ENCODE measurements at regions of chr10 and their contacts with region 1.

Region 1: DNA sequence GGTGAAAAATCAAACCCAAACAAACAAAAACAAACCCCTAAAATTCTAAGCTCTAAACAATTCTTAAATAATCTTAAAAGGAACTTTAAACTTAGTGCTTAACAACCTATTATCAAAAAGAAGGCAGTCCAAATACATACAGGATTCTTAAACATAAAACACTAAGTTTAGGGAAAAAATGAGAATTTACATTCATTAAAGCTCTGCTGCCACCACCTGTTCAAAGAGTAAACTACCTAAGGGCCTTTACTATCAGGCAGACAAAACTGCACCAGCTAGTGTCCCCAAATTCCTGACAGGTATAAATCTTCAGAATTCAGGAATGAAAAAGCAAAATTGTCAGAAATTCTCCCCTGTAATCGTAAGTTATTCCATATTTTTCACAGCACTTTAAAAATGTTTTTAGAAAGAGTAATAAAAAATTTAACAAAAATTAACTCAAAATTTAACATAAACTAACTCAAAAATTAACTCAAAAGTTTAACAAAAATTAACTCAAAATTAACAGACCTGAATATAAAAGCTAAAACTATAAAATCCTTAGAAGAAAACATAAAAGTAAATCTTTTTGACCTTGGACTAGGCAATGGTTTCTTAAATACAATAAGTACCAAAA is 55.1 kb downstream of the PDZD8 start:
- DNase-seq: no peak
- ATAC-seq: peak; percentile 80
- H3K4me3 ChIP-seq: no peak overlapping the region
- H3K27ac ChIP-seq: no peak overlapping the region
- H3K4me1 ChIP-seq: no peaks in the 10 kb centered on the region
- H3K27me3 ChIP-seq: no peaks in the 10 kb centered on the region
- CTCF ChIP-seq: peak; percentile 48 to 65 (median 56)
- EP300 ChIP-seq: no peak
- POLR2A ChIP-seq: no peak
- RAD21 ChIP-seq: peak; percentile 62

Region 2: GRCh38 chr10:117216611-117217195 is 103.5 kb before region 1 on chr10:
- CTCF ChIA-PET with region 1: interaction called, 136 read pairs
- POLR2A ChIA-PET with region 1: no interaction called
- RAD21 ChIA-PET with region 1: interaction called, 38 read pairs
- SMC1A ChIA-PET with region 1: interaction called, 44 read pairs
- in situ Hi-C with region 1: loop called (anchors 5 kb)
- intact Hi-C with region 1: loop called (anchors 1 kb)
- DNase-seq: no peak
- ATAC-seq: peak; percentile 94
- H3K4me3 ChIP-seq: peak overlapping the region; percentile 52
- H3K27ac ChIP-seq: no peak overlapping the region
- H3K4me1 ChIP-seq: peaks cover 3% of the 10 kb centered on the region; the same call in 1 of the 2 replicates
- H3K27me3 ChIP-seq: no peaks in the 10 kb centered on the region; a peak in 2 of 4 replicates
- CTCF ChIP-seq: peak; percentile 99 to 100 (median 100)
- EP300 ChIP-seq: no peak
- POLR2A ChIP-seq: no peak
- RAD21 ChIP-seq: peak; percentile 90

Region 3: GRCh38 chr10:117249493-117250093 is 70.6 kb before region 1 on chr10:
- CTCF ChIA-PET with region 1: interaction called, 23 read pairs
- POLR2A ChIA-PET with region 1: no interaction called
- RAD21 ChIA-PET with region 1: no interaction called
- SMC1A ChIA-PET with region 1: interaction called, 4 read pairs
- in situ Hi-C with region 1: no loop called
- intact Hi-C with region 1: no loop called
- DNase-seq: no peak
- ATAC-seq: peak; percentile 70
- H3K4me3 ChIP-seq: no peak overlapping the region
- H3K27ac ChIP-seq: no peak overlapping the region
- H3K4me1 ChIP-seq: no peaks in the 10 kb centered on the region
- H3K27me3 ChIP-seq: no peaks in the 10 kb centered on the region; a peak in 3 of 4 replicates
- CTCF ChIP-seq: no peak
- EP300 ChIP-seq: no peak
- POLR2A ChIP-seq: no peak
- RAD21 ChIP-seq: no peak

Region 4: GRCh38 chr10:117334066-117334465 is 13.9 kb after region 1 on chr10:
- CTCF ChIA-PET with region 1: interaction called, 37 read pairs
- POLR2A ChIA-PET with region 1: interaction called, 3 read pairs
- RAD21 ChIA-PET with region 1: interaction called, 5 read pairs
- SMC1A ChIA-PET with region 1: interaction called, 7 read pairs
- in situ Hi-C with region 1: no loop called
- intact Hi-C with region 1: no loop called
- DNase-seq: no peak
- ATAC-seq: no peak
- H3K4me3 ChIP-seq: no peak overlapping the region
- H3K27ac ChIP-seq: no peak overlapping the region
- H3K4me1 ChIP-seq: no peaks in the 10 kb centered on the region
- H3K27me3 ChIP-seq: no peaks in the 10 kb centered on the region
- CTCF ChIP-seq: no peak
- EP300 ChIP-seq: no peak
- POLR2A ChIP-seq: no peak
- RAD21 ChIP-seq: no peak

Region 5: GRCh38 chr10:117360994-117361667 is 41.0 kb after region 1 on chr10:
- CTCF ChIA-PET with region 1: interaction called, 16 read pairs
- POLR2A ChIA-PET with region 1: interaction called, 3 read pairs
- RAD21 ChIA-PET with region 1: interaction called, 4 read pairs
- SMC1A ChIA-PET with region 1: interaction called, 5 read pairs
- in situ Hi-C with region 1: no loop called
- intact Hi-C with region 1: no loop called
- DNase-seq: no peak
- ATAC-seq: peak; percentile 48
- H3K4me3 ChIP-seq: no peak overlapping the region
- H3K27ac ChIP-seq: peak overlapping the region; percentile 37
- H3K4me1 ChIP-seq: peaks cover 15% of the 10 kb centered on the region
- H3K27me3 ChIP-seq: no peaks in the 10 kb centered on the region
- CTCF ChIP-seq: no peak
- EP300 ChIP-seq: no peak
- POLR2A ChIP-seq: no peak
- RAD21 ChIP-seq: no peak

Region 6: GRCh38 chr10:117375360-117376178 is 55.4 kb after region 1 on chr10 and contains the start of gene PDZD8:
- CTCF ChIA-PET with region 1: interaction called, 17 read pairs
- POLR2A ChIA-PET with region 1: no interaction called
- RAD21 ChIA-PET with region 1: interaction called, 5 read pairs
- SMC1A ChIA-PET with region 1: interaction called, 16 read pairs
- in situ Hi-C with region 1: no loop called
- intact Hi-C with region 1: loop called (anchors 5 kb)
- DNase-seq: peak; percentile 33
- ATAC-seq: peak; percentile 83
- H3K4me3 ChIP-seq: peak within 1 kb of the TSS; percentile 84
- H3K27ac ChIP-seq: peak within 1 kb of the TSS; percentile 69
- H3K4me1 ChIP-seq: 0 out of 2 replicates have a peak, but pooled peaks cover 5% of the 10 kb centered on the region
- H3K27me3 ChIP-seq: no peaks in the 10 kb centered on the region; a peak in 1 of 4 replicates
- CTCF ChIP-seq: no peak
- EP300 ChIP-seq: no peak
- POLR2A ChIP-seq: peak; percentile 74; the same call in 1 of the 2 replicates
- RAD21 ChIP-seq: no peak
- polyA plus RNA-seq, gene PDZD8: 2.0 to 2.1 TPM

Region 7: GRCh38 chr10:117442944-117443685 is 123.0 kb after region 1 on chr10:
- CTCF ChIA-PET with region 1: interaction called, 14 read pairs
- POLR2A ChIA-PET with region 1: no interaction called
- RAD21 ChIA-PET with region 1: interaction called, 3 read pairs
- SMC1A ChIA-PET with region 1: interaction called, 5 read pairs
- in situ Hi-C with region 1: no loop called
- intact Hi-C with region 1: no loop called
- DNase-seq: peak; percentile 16
- ATAC-seq: peak; percentile 90
- H3K4me3 ChIP-seq: no peak overlapping the region
- H3K27ac ChIP-seq: no peak overlapping the region
- H3K4me1 ChIP-seq: 0 out of 2 replicates have a peak, but pooled peaks cover 5% of the 10 kb centered on the region
- H3K27me3 ChIP-seq: no peaks in the 10 kb centered on the region; a peak in 1 of 4 replicates
- CTCF ChIP-seq: peak; percentile 70 to 80 (median 79)
- EP300 ChIP-seq: no peak
- POLR2A ChIP-seq: no peak
- RAD21 ChIP-seq: peak; percentile 35